Mammary epithelial cell (primary cell): ENCODE measurements at regions of chr16 and their contacts with region 1.

Region 1: GRCh38 chr16:86072328-86073102 is 173.6 kb downstream of the IRF8 start:
- DNase-seq: peak; percentile 24
- H3K4me3 ChIP-seq: no peak overlapping the region
- H3K27ac ChIP-seq: no peak overlapping the region
- H3K4me1 ChIP-seq: no peaks in the 10 kb centered on the region
- H3K27me3 ChIP-seq: no peaks in the 10 kb centered on the region
- CTCF ChIP-seq: peak; percentile 75 to 78

Region 2: GRCh38 chr16:85789773-85790172 is 282.7 kb before region 1 on chr16:
- CTCF ChIA-PET with region 1: no interaction called
- dilution Hi-C with region 1: no loop called
- in situ Hi-C with region 1: no loop called
- intact Hi-C with region 1: no loop called
- DNase-seq: no peak
- H3K4me3 ChIP-seq: no peak overlapping the region
- H3K27ac ChIP-seq: no peak overlapping the region
- H3K4me1 ChIP-seq: no peaks in the 10 kb centered on the region
- H3K27me3 ChIP-seq: no peaks in the 10 kb centered on the region
- CTCF ChIP-seq: no peak

Region 3: DNA sequence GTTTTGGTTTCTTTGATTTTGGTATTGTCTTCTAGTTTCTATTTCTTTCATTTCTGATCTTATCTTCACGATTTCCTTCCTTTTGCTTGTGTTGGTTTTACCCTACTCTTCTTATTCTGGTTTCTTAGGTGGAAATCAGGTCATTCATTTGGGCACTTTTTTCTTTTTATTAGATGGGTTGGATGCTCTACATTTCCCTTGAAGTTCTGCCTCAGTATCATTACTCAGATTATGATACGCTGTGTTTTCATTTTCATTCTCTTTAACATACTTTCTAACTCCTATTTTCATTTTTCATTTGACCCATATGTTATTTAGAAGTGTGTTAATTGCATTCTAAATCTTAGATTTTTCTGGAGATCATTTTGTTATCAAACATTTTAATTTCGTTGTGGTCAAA is 65.0 kb before region 1 on chr16:
- CTCF ChIA-PET with region 1: no interaction called
- dilution Hi-C with region 1: loop called (anchors 5 kb)
- in situ Hi-C with region 1: no loop called
- intact Hi-C with region 1: no loop called
- DNase-seq: no peak
- H3K4me3 ChIP-seq: no peak overlapping the region
- H3K27ac ChIP-seq: no peak overlapping the region
- H3K4me1 ChIP-seq: no peaks in the 10 kb centered on the region
- H3K27me3 ChIP-seq: no peaks in the 10 kb centered on the region
- CTCF ChIP-seq: no peak

Region 4: DNA sequence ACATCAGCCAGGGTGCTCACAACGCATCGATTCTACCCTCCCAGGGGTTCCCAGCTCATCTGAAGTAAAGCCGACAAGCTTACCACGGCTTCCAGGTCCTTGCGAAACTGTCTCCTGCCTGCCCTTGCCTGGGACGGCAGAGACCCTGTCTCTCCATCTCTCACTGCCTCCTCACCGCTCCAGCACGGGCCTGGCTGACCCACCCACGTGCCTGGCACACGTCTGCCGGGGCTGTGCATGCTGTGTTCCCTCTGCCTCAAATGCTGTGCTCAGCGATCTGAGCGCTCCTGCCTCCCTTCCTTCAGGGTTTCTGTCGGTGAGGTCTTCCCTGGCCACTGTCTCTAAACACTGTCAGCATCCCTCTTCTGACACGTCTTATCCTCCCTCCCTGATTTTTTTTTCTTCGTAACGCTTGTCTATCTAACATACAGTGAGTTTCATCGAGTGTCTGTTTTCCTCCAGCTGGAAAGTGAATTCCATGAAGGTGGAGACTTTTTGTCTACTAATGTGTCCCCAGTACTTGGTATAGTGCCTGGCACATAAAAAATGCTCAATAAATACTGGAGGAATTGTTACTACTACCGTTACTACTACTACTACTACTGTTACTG is 34.8 kb after region 1 on chr16:
- CTCF ChIA-PET with region 1: no interaction called
- dilution Hi-C with region 1: loop called (anchors 5 kb)
- in situ Hi-C with region 1: no loop called
- intact Hi-C with region 1: no loop called
- DNase-seq: no peak
- H3K4me3 ChIP-seq: no peak overlapping the region
- H3K27ac ChIP-seq: no peak overlapping the region
- H3K4me1 ChIP-seq: no peaks in the 10 kb centered on the region
- H3K27me3 ChIP-seq: no peaks in the 10 kb centered on the region
- CTCF ChIP-seq: no peak

Region 5: GRCh38 chr16:86519649-86520316 is 447.3 kb after region 1 on chr16:
- CTCF ChIA-PET with region 1: no interaction called
- dilution Hi-C with region 1: loop called (anchors 5 kb)
- in situ Hi-C with region 1: loop called (anchors 5 kb)
- intact Hi-C with region 1: loop called (anchors 1 kb)
- DNase-seq: no peak
- H3K4me3 ChIP-seq: no peak overlapping the region
- H3K27ac ChIP-seq: no peak overlapping the region
- H3K4me1 ChIP-seq: no peaks in the 10 kb centered on the region
- H3K27me3 ChIP-seq: peaks cover 28% of the 10 kb centered on the region
- CTCF ChIP-seq: peak; percentile 83 to 89